ENCODE measurements at regions of chr1 and their contacts with region 1.

Region 1: DNA sequence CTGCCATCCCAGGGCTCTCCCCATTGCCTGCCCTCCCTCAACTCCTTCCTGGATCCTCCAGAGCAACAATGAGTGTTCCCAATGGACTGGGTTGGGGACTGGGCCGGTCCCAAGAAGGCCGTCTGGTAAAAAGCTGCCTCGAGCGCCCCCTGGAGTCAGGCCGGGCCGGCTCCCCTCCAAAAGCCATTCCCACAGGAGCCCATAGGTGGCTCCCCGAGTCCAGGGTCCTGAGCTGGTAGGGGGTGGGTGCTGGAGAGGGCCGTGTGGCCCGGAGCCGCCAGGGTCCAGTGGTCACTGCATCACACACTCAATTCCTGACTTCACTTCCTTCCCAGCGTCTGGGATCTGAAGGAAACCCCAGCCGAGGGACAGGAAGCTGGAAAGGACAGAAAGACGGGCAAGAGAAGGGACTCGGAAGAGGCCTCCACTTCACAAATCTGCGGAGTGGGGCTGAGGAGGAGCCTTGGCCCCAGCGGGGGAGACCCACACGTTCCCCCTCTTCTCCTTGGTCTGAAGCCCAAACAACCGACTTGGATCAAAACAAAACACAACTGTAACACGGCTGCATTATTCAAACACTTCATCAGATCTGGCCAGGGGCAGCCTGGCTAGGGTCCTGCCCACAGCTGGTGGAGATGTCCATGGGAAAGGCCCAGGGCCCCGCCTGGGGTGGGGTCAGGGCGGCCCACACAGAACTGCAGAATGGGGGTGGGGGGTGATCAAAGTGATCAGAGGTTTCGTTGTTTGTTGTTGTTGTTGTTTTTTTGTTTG is 10.9 kb upstream of the ALDH4A1 start:
- DNase-seq: peak; percentile 56 to 87 (median 70)
- ATAC-seq: peak; percentile 86
- H3K4me3 ChIP-seq: no peak overlapping the region
- H3K4me3 Mint-ChIP-seq: no peak overlapping the region
- H3K27ac ChIP-seq: no peak overlapping the region
- H3K27ac Mint-ChIP-seq: peak overlapping the region; percentile 16
- H3K4me1 ChIP-seq: peaks cover 14% of the 10 kb centered on the region
- H3K4me1 Mint-ChIP-seq: peaks cover 6% of the 10 kb centered on the region
- H3K27me3 ChIP-seq: no peaks in the 10 kb centered on the region
- H3K27me3 Mint-ChIP-seq: no peaks in the 10 kb centered on the region
- CTCF ChIP-seq: peak; percentile 95

Region 2: GRCh38 chr1:18870957-18871356 is 42.3 kb before region 1 on chr1:
- CTCF ChIA-PET with region 1: no interaction called
- POLR2A ChIA-PET with region 1: no interaction called
- intact Hi-C with region 1: no loop called
- DNase-seq: no peak
- ATAC-seq: no peak
- H3K4me3 ChIP-seq: no peak overlapping the region
- H3K4me3 Mint-ChIP-seq: no peak overlapping the region
- H3K27ac ChIP-seq: no peak overlapping the region
- H3K27ac Mint-ChIP-seq: no peak overlapping the region
- H3K4me1 ChIP-seq: no peaks in the 10 kb centered on the region
- H3K4me1 Mint-ChIP-seq: no peaks in the 10 kb centered on the region
- H3K27me3 ChIP-seq: peaks cover 0 to under 1% of the 10 kb centered on the region in 2 experiments
- H3K27me3 Mint-ChIP-seq: no peaks in the 10 kb centered on the region
- CTCF ChIP-seq: no peak

Region 3: GRCh38 chr1:18883636-18884418 is 29.4 kb before region 1 on chr1:
- CTCF ChIA-PET with region 1: interaction called, 25 read pairs
- POLR2A ChIA-PET with region 1: no interaction called
- intact Hi-C with region 1: no loop called
- DNase-seq: peak; percentile 56 to 82 (median 68)
- ATAC-seq: peak; percentile 86
- H3K4me3 ChIP-seq: no peak overlapping the region
- H3K4me3 Mint-ChIP-seq: no peak overlapping the region
- H3K27ac ChIP-seq: no peak overlapping the region
- H3K27ac Mint-ChIP-seq: no peak overlapping the region
- H3K4me1 ChIP-seq: no peaks in the 10 kb centered on the region
- H3K4me1 Mint-ChIP-seq: no peaks in the 10 kb centered on the region
- H3K27me3 ChIP-seq: no peaks in the 10 kb centered on the region
- H3K27me3 Mint-ChIP-seq: no peaks in the 10 kb centered on the region
- CTCF ChIP-seq: peak; percentile 88

Region 4: GRCh38 chr1:18949686-18950400 is 36.6 kb after region 1 on chr1:
- CTCF ChIA-PET with region 1: interaction called, 29 read pairs
- POLR2A ChIA-PET with region 1: interaction called, 27 read pairs
- intact Hi-C with region 1: no loop called
- DNase-seq: peak in 3 of 14 experiments; percentile 30 to 57 (median 49)
- ATAC-seq: no peak
- H3K4me3 ChIP-seq: peak overlapping the region; percentile 50
- H3K4me3 Mint-ChIP-seq: peak overlapping the region; percentile 99
- H3K27ac ChIP-seq: peak overlapping the region; percentile 95
- H3K27ac Mint-ChIP-seq: peak overlapping the region; percentile 99
- H3K4me1 ChIP-seq: peaks cover 100% of the 10 kb centered on the region
- H3K4me1 Mint-ChIP-seq: peaks cover 97% of the 10 kb centered on the region
- H3K27me3 ChIP-seq: no peaks in the 10 kb centered on the region
- H3K27me3 Mint-ChIP-seq: no peaks in the 10 kb centered on the region
- CTCF ChIP-seq: no peak

Region 5: DNA sequence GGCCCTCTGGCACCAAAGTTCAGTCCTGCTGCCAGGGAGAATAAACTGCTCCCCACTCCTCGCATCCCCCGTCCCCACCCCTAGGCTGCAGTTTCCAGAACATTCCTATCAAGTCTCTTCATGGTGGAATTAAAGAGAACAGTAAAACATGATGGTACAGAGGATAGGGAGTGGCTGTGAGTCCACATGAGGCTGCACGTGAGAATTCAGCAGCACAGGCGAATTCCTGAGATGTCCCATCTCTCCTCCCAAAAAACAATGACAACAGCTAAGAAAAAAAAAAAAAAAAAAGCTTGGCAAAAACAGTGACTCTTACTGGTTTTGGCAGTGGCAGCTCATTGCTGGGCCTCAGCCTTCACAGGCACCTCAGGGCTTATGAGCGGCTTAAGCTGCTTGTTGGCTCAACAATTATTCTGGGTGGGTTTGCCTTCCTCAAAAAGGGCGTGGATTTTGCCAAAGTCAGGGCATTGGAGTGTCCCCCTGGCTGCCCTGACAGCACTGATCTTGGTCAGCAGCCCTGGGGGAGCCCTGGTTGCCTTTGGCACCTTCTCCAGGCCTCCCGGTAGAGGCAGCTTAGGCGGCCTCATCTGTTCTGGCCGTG is 49.0 kb after region 1 on chr1:
- CTCF ChIA-PET with region 1: interaction called, 21 read pairs
- POLR2A ChIA-PET with region 1: interaction called, 27 read pairs
- intact Hi-C with region 1: no loop called
- DNase-seq: no peak
- ATAC-seq: no peak
- H3K4me3 ChIP-seq: no peak overlapping the region
- H3K4me3 Mint-ChIP-seq: no peak overlapping the region
- H3K27ac ChIP-seq: no peak overlapping the region
- H3K27ac Mint-ChIP-seq: no peak overlapping the region
- H3K4me1 ChIP-seq: peaks cover 15% of the 10 kb centered on the region
- H3K4me1 Mint-ChIP-seq: peaks cover 26% of the 10 kb centered on the region
- H3K27me3 ChIP-seq: no peaks in the 10 kb centered on the region
- H3K27me3 Mint-ChIP-seq: no peaks in the 10 kb centered on the region
- CTCF ChIP-seq: no peak

Region 6: DNA sequence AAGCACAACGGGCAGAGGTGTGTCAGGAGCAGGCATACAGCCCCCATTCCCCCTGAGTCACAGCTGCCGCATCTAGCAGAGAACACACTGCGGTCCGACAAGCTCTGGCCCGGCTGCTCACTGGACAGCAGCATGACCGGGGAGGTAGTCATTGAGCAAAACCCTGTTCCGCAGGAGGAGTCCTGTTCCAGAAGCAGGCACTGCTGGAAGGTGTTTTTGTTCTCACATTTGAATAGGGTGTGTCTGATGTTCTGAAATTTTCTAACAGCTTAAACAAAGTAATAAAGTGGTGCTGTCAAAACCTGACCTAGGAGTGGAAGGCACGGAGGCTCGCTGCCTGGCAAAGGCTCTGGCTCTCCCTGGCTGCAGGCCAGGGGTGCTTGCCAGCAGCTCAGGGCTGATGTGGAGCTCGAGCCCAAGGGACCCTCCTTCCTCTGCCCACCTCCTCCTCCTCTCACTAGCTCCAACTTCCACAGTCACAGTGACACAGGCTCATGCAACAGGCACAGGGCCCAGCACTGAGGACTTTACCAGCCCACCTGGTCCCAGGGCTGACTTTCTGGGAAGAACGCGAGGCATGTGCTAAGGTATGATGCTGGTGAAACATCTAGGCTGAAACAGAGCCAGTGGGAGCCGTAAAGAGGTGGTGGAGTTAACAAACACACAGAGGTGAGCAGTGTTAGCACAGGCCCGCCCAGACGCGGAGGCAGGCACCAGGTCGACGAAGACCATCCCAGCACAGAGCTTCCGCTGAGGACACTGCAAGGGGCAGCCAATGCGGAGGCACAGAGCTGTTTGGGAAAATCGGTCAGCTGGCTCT is 161.9 kb after region 1 on chr1:
- CTCF ChIA-PET with region 1: interaction called, 12 read pairs
- POLR2A ChIA-PET with region 1: interaction called, 4 read pairs
- intact Hi-C with region 1: loop called in 1 of 2 experiments (anchors 5 kb)
- DNase-seq: peak in 1 of 14 experiments; percentile 23
- ATAC-seq: peak; percentile 19
- H3K4me3 ChIP-seq: peak overlapping the region; percentile 25
- H3K4me3 Mint-ChIP-seq: peak overlapping the region; percentile 72
- H3K27ac ChIP-seq: no peak overlapping the region
- H3K27ac Mint-ChIP-seq: peak overlapping the region; percentile 83
- H3K4me1 ChIP-seq: peaks cover 58% of the 10 kb centered on the region
- H3K4me1 Mint-ChIP-seq: peaks cover 63% of the 10 kb centered on the region
- H3K27me3 ChIP-seq: no peaks in the 10 kb centered on the region
- H3K27me3 Mint-ChIP-seq: no peaks in the 10 kb centered on the region
- CTCF ChIP-seq: no peak

Measured in CD4-positive, alpha-beta T cell (primary cell).